Mammary epithelial cell (primary cell): ENCODE measurements at regions of chr20 and their contacts with region 1.

Region 1: GRCh38 chr20:699811-700338 is 24.3 kb upstream of the SCRT2 start:
- DNase-seq: no peak
- H3K4me3 ChIP-seq: no peak overlapping the region
- H3K27ac ChIP-seq: no peak overlapping the region
- H3K4me1 ChIP-seq: no peaks in the 10 kb centered on the region
- H3K27me3 ChIP-seq: peaks cover 5% of the 10 kb centered on the region
- CTCF ChIP-seq: no peak

Region 2: DNA sequence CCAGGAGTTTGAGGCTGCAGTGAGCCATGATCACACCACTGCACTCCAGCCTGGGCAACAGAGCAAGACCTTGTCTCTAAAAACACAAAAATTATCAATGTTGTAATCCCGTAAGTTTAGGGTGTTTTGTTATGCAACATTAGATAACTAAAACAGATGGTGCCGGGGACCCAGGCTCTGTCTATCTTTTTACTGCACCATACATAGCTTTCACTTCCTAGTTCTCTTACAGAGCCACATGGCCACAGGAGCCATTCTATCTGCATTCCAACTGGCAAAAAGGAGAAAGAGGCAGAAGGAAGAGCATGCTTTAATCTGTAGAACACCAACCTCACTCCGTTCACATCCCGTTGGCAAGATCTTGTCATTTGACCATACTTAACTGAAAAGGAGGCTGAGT is 84.4 kb before region 1 on chr20:
- CTCF ChIA-PET with region 1: no interaction called
- dilution Hi-C with region 1: loop called (anchors 5 kb)
- in situ Hi-C with region 1: no loop called
- intact Hi-C with region 1: no loop called
- DNase-seq: no peak
- H3K4me3 ChIP-seq: no peak overlapping the region
- H3K27ac ChIP-seq: no peak overlapping the region
- H3K4me1 ChIP-seq: no peaks in the 10 kb centered on the region
- H3K27me3 ChIP-seq: peaks cover 23% of the 10 kb centered on the region
- CTCF ChIP-seq: no peak